ENCODE measurements at regions of chr14 and their contacts with region 1.

Region 1: GRCh38 chr14:30443368-30444007 is 115.5 kb upstream of the G2E3 start:
- DNase-seq: no peak
- ATAC-seq: peak; percentile 59; the same call in 1 of the 2 replicates
- H3K4me3 Mint-ChIP-seq: no peak overlapping the region
- H3K27ac Mint-ChIP-seq: no peak overlapping the region
- H3K4me1 Mint-ChIP-seq: peaks cover 8% of the 10 kb centered on the region
- H3K27me3 Mint-ChIP-seq: no peaks in the 10 kb centered on the region
- CTCF ChIP-seq: no peak

Region 2: DNA sequence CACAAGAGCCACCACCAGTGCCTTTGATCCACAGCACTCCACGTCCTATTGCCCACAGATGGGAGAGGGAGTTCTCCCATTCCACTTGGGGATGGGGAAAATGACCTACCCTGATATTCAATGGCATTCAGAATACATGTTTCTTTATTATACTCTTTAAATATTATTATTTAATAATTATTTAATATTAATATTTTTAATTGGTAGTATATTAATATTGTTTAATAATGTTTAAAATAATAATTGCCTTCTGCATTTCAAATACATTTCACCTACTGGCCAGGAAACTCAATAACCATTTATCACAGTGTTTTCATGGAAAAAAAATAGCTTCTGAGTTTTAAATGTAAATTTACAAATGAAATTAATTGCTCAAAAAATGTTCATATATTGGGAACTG is 11.9 kb before region 1 on chr14:
- CTCF ChIA-PET with region 1: interaction called, 12 read pairs
- POLR2A ChIA-PET with region 1: no interaction called
- DNase-seq: no peak
- ATAC-seq: no peak
- H3K4me3 Mint-ChIP-seq: no peak overlapping the region
- H3K27ac Mint-ChIP-seq: no peak overlapping the region
- H3K4me1 Mint-ChIP-seq: peaks cover 18% of the 10 kb centered on the region
- H3K27me3 Mint-ChIP-seq: no peaks in the 10 kb centered on the region
- CTCF ChIP-seq: no peak

Measured in WTC11 (cell line).